H1 (cell line): ENCODE measurements at regions of chr3 and their contacts with region 1.

Region 1: DNA sequence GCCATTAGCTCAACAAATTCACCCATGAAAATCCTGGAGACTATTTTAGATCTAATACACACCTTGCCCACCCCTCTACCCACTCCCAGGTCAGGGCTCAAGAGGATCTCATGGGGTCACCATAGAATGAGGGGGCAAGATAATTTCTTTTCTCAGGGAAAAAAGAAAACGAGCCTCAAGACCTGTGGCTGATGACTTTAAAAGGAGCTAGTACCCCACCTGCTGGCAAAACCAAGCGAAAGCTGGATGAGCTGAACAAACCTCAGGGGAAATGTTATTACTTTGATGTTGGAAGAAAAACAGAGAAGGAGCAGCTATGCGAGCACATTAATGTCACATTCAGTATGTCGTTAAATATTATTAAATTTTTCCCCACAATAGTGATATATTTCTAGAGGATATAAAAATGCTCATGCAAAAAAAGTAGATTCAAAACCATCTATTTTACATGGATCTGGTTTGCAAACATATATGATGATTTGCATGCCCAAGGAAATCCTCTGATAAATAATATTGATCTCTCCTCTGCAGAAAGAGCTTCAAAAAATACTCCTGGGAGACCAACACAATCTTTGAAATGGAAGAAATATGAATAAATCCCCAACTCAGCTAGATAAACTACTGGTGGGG is 37.7 kb downstream of the PLD1 start:
- DNase-seq: no peak
- H3K4me3 ChIP-seq: no peak overlapping the region
- H3K27ac ChIP-seq: no peak overlapping the region
- H3K4me1 ChIP-seq: peaks cover 2 to 8% (median 7%) of the 10 kb centered on the region in 4 experiments; a peak in 5 of 7 replicates
- H3K27me3 ChIP-seq: no peaks in the 10 kb centered on the region
- CTCF ChIP-seq: peak; percentile 2 to 75 (median 71)
- EP300 ChIP-seq: no peak
- POLR2A ChIP-seq: no peak
- RAD21 ChIP-seq: peak; percentile 88 to 92

Region 2: DNA sequence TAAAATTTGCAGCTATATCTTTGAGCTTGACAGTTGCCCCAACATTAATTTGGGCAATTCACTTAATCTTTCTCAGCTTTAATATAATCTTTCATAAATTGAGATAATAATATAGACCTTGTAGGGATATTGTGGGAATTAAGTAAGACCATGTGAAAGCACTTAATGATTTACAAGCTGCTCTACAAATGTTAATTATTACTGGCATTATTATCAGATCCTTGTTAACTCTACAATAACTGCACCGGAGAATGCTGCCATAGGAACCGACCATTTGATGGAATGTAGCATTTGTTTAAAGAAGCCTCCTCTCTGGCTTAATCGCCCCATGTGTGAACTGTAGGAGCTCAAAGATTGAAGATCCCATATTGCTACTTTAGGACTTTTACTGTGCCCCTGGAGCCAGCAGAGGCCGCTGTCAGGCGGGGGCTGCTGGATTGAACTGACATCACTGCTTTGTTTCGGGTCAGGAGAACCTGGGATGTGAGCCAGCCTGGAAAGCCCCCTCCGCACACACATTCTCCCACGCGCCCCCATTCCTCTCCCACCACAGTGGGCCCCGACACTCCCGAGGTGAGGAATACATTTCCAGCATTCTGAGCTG is 158.1 kb before region 1 on chr3:
- CTCF ChIA-PET with region 1: interaction called, 47 read pairs
- POLR2A ChIA-PET with region 1: no interaction called
- DNase-seq: peak; percentile 29 to 76
- H3K4me3 ChIP-seq: no peak overlapping the region
- H3K27ac ChIP-seq: no peak overlapping the region
- H3K4me1 ChIP-seq: no peaks in the 10 kb centered on the region
- H3K27me3 ChIP-seq: no peaks in the 10 kb centered on the region
- CTCF ChIP-seq: peak; percentile 78 to 82 (median 78)
- EP300 ChIP-seq: 0 out of 3 replicates have a peak, but pooled peaks of 1 of the 2 experiments have one; percentile 19
- POLR2A ChIP-seq: no peak
- RAD21 ChIP-seq: peak; percentile 74 to 84

Region 3: DNA sequence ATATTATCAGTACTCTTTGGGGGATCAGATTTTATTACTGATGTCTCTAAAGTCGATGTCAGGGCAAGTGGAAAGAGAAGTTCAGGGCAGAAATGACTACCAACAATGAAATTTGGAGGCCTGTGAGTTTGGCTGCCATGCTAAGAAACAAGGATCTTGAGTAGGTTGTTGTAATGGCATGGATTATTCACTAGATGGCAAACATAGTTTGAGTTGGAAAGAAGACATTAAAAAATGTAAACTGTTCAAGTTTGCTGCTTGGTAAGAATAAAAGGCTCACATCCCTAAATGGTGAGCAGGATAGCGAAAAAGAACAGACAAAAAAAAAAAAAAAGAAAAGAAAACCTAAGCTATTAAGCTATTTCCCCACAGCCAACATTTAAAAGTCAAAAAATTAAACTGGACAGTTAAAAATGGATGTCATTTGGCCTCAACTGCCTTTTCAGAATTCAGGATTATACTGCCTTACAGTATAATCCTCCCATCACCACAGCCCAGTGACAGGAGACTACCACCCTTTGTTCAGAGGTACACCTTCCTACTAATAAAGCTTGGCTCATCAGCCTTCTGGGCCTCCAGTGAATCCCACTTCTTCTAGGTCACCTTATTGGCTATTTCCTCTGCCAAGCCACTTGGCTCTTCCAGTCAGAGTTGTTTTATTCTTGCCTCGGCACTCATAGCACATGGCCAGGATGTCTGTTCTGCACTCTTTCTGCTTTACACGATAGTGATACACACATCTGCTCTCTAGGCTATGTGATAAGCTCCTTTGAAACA is 126.0 kb before region 1 on chr3:
- CTCF ChIA-PET with region 1: interaction called, 49 read pairs
- POLR2A ChIA-PET with region 1: interaction called, 3 read pairs
- DNase-seq: no peak
- H3K4me3 ChIP-seq: no peak overlapping the region
- H3K27ac ChIP-seq: no peak overlapping the region
- H3K4me1 ChIP-seq: no peaks in the 10 kb centered on the region
- H3K27me3 ChIP-seq: no peaks in the 10 kb centered on the region
- CTCF ChIP-seq: peak in 2 of 3 experiments; percentile 36 to 54; a peak in 2 of 4 replicates
- EP300 ChIP-seq: no peak
- POLR2A ChIP-seq: no peak
- RAD21 ChIP-seq: peak; percentile 62 to 66

Region 4: DNA sequence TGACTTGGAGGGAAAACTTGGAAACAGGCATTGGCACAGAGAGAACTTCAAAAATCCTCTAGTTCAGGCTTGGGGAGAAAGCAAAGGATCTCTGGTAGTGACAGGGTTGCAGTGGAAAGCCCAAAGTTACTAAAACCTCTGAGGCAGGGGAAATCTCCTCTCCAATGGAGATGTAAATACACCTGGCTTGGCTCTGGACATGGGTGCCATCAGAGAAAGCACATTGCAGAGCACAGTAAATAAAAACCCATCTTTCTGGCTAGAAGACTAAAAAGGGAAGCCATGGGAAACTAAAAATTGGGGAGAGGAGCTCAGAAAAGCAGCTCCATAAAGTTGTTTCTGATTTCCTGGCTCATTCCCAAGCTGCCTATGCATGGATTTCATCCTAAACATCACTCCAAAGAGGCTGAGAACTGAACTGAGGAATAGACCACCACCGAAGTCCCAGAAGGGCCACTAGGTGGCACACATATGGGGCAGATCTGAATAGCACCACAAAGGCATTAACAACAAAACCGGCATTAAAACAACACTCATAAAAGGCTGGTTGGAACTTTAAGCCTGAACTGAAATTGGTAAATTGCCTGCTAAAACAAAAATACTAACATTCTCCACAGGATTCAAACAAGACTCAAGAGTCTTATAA is 68.7 kb before region 1 on chr3:
- CTCF ChIA-PET with region 1: interaction called, 38 read pairs
- POLR2A ChIA-PET with region 1: no interaction called
- DNase-seq: no peak
- H3K4me3 ChIP-seq: no peak overlapping the region
- H3K27ac ChIP-seq: no peak overlapping the region
- H3K4me1 ChIP-seq: no peaks in the 10 kb centered on the region
- H3K27me3 ChIP-seq: no peaks in the 10 kb centered on the region
- CTCF ChIP-seq: peak; percentile 50 to 76 (median 67)
- EP300 ChIP-seq: no peak
- POLR2A ChIP-seq: no peak
- RAD21 ChIP-seq: peak; percentile 62 to 73

Region 5: DNA sequence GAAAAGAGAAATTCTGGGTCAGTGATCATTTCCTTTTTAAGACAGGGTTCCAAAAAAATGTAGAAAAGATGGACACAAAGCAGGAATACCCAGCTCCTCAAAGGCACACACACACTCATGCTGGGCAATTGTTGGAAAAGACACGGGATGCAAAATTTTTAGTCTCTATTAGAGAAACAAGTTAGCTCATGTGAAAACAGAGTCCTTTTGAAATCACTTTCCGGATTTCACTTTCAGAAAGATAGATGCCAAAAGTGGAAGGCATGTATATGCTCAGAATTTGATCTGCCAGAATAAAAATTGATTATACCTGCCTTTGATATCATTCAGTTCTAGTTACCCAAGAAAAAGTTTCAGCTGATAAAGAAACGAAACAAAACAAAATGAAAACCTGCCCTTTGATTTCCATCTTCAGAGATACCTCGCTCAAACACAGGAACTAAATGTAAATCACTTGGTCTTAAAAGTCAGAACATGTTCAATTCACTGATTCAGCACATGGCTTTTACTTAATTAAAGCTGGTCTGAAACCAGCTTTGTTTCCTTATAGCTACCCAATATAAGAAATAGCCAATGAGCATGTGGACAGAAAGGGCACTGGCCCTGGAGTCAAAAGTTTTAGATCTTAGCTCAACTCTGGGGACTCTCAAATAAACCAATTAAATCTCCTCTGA is 15.0 kb before region 1 on chr3:
- CTCF ChIA-PET with region 1: interaction called, 16 read pairs
- POLR2A ChIA-PET with region 1: no interaction called
- DNase-seq: no peak
- H3K4me3 ChIP-seq: no peak overlapping the region
- H3K27ac ChIP-seq: no peak overlapping the region
- H3K4me1 ChIP-seq: no peaks in the 10 kb centered on the region
- H3K27me3 ChIP-seq: no peaks in the 10 kb centered on the region
- CTCF ChIP-seq: no peak
- EP300 ChIP-seq: no peak
- POLR2A ChIP-seq: no peak
- RAD21 ChIP-seq: no peak

Region 6: GRCh38 chr3:171829841-171830517 is 57.4 kb after region 1 on chr3:
- CTCF ChIA-PET with region 1: interaction called, 20 read pairs
- POLR2A ChIA-PET with region 1: no interaction called
- DNase-seq: peak in 1 of 2 experiments; percentile 73
- H3K4me3 ChIP-seq: no peak overlapping the region
- H3K27ac ChIP-seq: no peak overlapping the region
- H3K4me1 ChIP-seq: peaks cover 2 to 6% (median 3%) of the 10 kb centered on the region in 4 experiments; a peak in 5 of 7 replicates
- H3K27me3 ChIP-seq: no peaks in the 10 kb centered on the region
- CTCF ChIP-seq: peak; percentile 77 to 92 (median 89)
- EP300 ChIP-seq: no peak
- POLR2A ChIP-seq: no peak
- RAD21 ChIP-seq: peak; percentile 74 to 86